Activated CD4-positive, alpha-beta memory T cell treated with anti-CD3 and anti-CD28 coated beads for 36 hours (primary cell): ENCODE measurements at regions of chrX and their contacts with region 1.

Region 1: GRCh38 chrX:46446727-46447378 is 98.4 kb downstream of the ZNF674 start:
- DNase-seq: peak; percentile 91
- H3K4me3 Mint-ChIP-seq: peak overlapping the region; percentile 81
- H3K27ac Mint-ChIP-seq: peak overlapping the region; percentile 90
- H3K4me1 Mint-ChIP-seq: peaks cover 15% of the 10 kb centered on the region
- H3K27me3 Mint-ChIP-seq: no peaks in the 10 kb centered on the region

Region 2: GRCh38 chrX:46461653-46462191 is 14.9 kb after region 1 on chrX:
- CTCF ChIA-PET with region 1: no interaction called
- POLR2A ChIA-PET with region 1: no interaction called
- intact Hi-C with region 1: no loop called
- DNase-seq: no peak
- H3K4me3 Mint-ChIP-seq: no peak overlapping the region
- H3K27ac Mint-ChIP-seq: peak overlapping the region; percentile 34
- H3K4me1 Mint-ChIP-seq: peaks cover 20% of the 10 kb centered on the region
- H3K27me3 Mint-ChIP-seq: no peaks in the 10 kb centered on the region

Region 3: DNA sequence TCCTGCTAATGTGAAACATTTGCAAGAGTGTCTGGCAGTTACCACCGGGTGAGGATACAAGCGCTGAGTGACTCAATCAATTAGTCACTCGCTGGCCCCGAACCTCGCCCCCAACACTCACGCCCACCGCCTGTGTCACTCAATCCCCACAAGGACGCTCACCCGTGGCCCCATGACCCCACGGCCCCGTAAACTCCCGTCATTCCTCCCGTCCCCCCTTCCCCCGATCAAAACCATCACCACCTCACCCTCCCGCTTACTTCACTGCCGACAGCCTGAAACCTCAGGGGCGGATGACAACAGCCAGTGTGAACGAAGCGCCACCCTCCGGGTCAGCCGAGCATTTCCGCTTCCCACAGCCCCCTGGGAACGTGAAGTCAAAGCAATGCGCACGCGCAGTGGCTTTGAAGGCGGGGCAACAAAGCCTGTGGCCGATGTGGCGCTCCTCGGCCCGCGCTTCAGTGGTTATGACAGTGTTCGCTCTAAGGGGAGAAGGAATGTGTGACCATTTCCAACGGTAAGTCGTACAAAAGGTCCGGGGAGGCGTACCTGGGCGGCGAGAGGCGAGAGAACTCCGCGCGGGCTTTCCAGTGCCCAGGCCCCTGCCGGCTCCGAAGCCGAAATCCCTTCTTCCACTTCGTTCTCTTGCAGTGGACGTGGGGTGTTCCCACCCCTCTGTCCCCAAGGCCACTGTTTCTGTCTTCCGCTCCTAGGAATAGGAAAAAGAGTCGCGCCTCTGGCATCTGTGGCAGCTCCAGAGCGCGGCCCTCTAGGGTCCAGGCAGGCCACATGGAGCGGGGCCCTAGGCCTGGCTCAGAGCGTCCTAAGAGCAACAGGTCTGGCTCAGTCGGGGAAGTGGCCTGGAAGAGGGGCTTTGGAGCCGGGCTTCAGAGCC is 98.5 kb after region 1 on chrX and contains the start of gene ZNF674:
- CTCF ChIA-PET with region 1: no interaction called
- POLR2A ChIA-PET with region 1: no interaction called
- intact Hi-C with region 1: loop called (anchors 1 kb)
- DNase-seq: peak; percentile 95
- H3K4me3 Mint-ChIP-seq: peak within 1 kb of the TSS; percentile 92
- H3K27ac Mint-ChIP-seq: peak within 1 kb of the TSS; percentile 97
- H3K4me1 Mint-ChIP-seq: peaks cover 25% of the 10 kb centered on the region
- H3K27me3 Mint-ChIP-seq: no peaks in the 10 kb centered on the region
- total RNA-seq, gene ZNF674: 2.6 to 3.0 TPM

Region 4: GRCh38 chrX:46589977-46590723 is 143.3 kb after region 1 on chrX:
- CTCF ChIA-PET with region 1: no interaction called
- POLR2A ChIA-PET with region 1: no interaction called
- intact Hi-C with region 1: no loop called
- DNase-seq: no peak
- H3K4me3 Mint-ChIP-seq: no peak overlapping the region
- H3K27ac Mint-ChIP-seq: peak overlapping the region; percentile 56
- H3K4me1 Mint-ChIP-seq: peaks cover 55% of the 10 kb centered on the region
- H3K27me3 Mint-ChIP-seq: no peaks in the 10 kb centered on the region

Region 5: DNA sequence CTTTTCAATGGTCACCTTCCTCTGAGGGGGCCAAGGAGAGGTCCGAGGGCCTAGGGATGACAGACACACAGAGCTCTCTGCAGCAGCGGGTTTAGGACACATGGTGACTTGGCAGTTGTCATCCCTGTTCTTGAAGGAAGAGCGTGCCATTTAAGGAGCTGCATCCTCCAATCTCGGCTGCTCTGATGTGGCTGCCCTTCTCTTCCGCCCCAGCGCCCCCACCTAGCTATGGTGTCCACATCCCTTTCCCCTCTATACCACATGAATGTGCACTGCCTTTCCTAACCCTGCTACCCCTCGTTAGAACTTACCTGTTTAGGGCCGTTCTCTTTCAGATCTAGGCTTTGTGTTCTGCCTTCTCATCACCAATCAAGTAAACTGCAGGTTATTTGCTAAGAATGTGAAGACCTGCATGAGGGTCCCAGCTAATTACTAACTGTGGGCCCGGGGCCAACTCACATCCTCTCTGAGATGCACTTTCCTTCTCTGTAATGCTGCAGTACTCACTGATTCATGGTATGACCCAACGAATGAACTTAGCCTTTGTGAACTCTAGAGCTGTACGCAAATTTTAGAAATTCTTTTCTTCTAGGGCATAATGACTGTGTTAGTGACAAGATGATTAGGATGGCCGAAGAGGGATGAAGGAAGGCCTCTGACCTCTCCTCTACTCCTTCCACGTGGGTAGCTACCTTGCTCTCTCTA is 165.0 kb after region 1 on chrX:
- CTCF ChIA-PET with region 1: no interaction called
- POLR2A ChIA-PET with region 1: no interaction called
- intact Hi-C with region 1: no loop called
- DNase-seq: peak; percentile 51
- H3K4me3 Mint-ChIP-seq: peak overlapping the region; percentile 28
- H3K27ac Mint-ChIP-seq: peak overlapping the region; percentile 62
- H3K4me1 Mint-ChIP-seq: peaks cover 35% of the 10 kb centered on the region
- H3K27me3 Mint-ChIP-seq: no peaks in the 10 kb centered on the region

Region 6: GRCh38 chrX:46628460-46629371 is 181.9 kb after region 1 on chrX:
- CTCF ChIA-PET with region 1: no interaction called
- POLR2A ChIA-PET with region 1: no interaction called
- intact Hi-C with region 1: no loop called
- DNase-seq: peak; percentile 46
- H3K4me3 Mint-ChIP-seq: no peak overlapping the region
- H3K27ac Mint-ChIP-seq: peak overlapping the region; percentile 64
- H3K4me1 Mint-ChIP-seq: peaks cover 42% of the 10 kb centered on the region
- H3K27me3 Mint-ChIP-seq: no peaks in the 10 kb centered on the region